Naive thymus-derived CD4-positive, alpha-beta T cell (primary cell): ENCODE measurements at regions of chr6 and their contacts with region 1.

Region 1: GRCh38 chr6:37018198-37019064 is 13.0 kb downstream of the FGD2 start:
- DNase-seq: peak; percentile 74 to 88 (median 83)
- ATAC-seq: peak; percentile 96
- H3K4me3 ChIP-seq: no peak overlapping the region
- H3K4me3 Mint-ChIP-seq: peak overlapping the region in 3 of 10 donors; percentile 17 to 40 (median 35)
- H3K27ac ChIP-seq: peak overlapping the region; percentile 15
- H3K27ac Mint-ChIP-seq: peak overlapping the region; percentile 65 to 87 (median 80)
- H3K4me1 ChIP-seq: peaks cover 23 to 32% of the 10 kb centered on the region in 2 donors
- H3K4me1 Mint-ChIP-seq: peaks cover 35 to 55% (median 46%) of the 10 kb centered on the region in 7 donors
- H3K27me3 ChIP-seq: no peaks in the 10 kb centered on the region
- H3K27me3 Mint-ChIP-seq: no peaks in the 10 kb centered on the region

Region 2: GRCh38 chr6:36765594-36766398 is 252.6 kb before region 1 on chr6:
- CTCF ChIA-PET with region 1: interaction called, 31 read pairs
- POLR2A ChIA-PET with region 1: interaction called, 3 read pairs
- intact Hi-C with region 1: loop called (anchors 1 kb)
- DNase-seq: peak; percentile 66 to 83 (median 78)
- ATAC-seq: peak; percentile 94
- H3K4me3 ChIP-seq: no peak overlapping the region
- H3K4me3 Mint-ChIP-seq: peak overlapping the region in 2 of 10 donors; percentile 16 to 25
- H3K27ac ChIP-seq: no peak overlapping the region
- H3K27ac Mint-ChIP-seq: peak overlapping the region; percentile 13 to 80 (median 56)
- H3K4me1 ChIP-seq: peaks cover 21 to 33% of the 10 kb centered on the region in 2 donors
- H3K4me1 Mint-ChIP-seq: peaks cover 28 to 42% (median 32%) of the 10 kb centered on the region in 7 donors
- H3K27me3 ChIP-seq: no peaks in the 10 kb centered on the region
- H3K27me3 Mint-ChIP-seq: no peaks in the 10 kb centered on the region

Region 3: GRCh38 chr6:36912586-36912985 is 105.8 kb before region 1 on chr6:
- CTCF ChIA-PET with region 1: interaction called, 3 read pairs
- POLR2A ChIA-PET with region 1: no interaction called
- intact Hi-C with region 1: loop called (anchors 1 kb)
- DNase-seq: peak in 8 of 9 donors; percentile 54 to 81 (median 72)
- ATAC-seq: peak; percentile 94
- H3K4me3 ChIP-seq: peak overlapping the region; percentile 32
- H3K4me3 Mint-ChIP-seq: peak overlapping the region; percentile 60 to 84 (median 74)
- H3K27ac ChIP-seq: peak overlapping the region; percentile 44
- H3K27ac Mint-ChIP-seq: peak overlapping the region; percentile 73 to 97 (median 92)
- H3K4me1 ChIP-seq: peaks cover 23% of the 10 kb centered on the region in 2 donors
- H3K4me1 Mint-ChIP-seq: peaks cover 18 to 69% (median 38%) of the 10 kb centered on the region in 7 donors
- H3K27me3 ChIP-seq: no peaks in the 10 kb centered on the region
- H3K27me3 Mint-ChIP-seq: no peaks in the 10 kb centered on the region

Region 4: GRCh38 chr6:37029249-37029971 is 11.0 kb after region 1 on chr6:
- CTCF ChIA-PET with region 1: interaction called, 22 read pairs
- POLR2A ChIA-PET with region 1: no interaction called
- intact Hi-C with region 1: no loop called
- DNase-seq: peak in 1 of 9 donors; percentile 54
- ATAC-seq: peak; percentile 92
- H3K4me3 ChIP-seq: no peak overlapping the region
- H3K4me3 Mint-ChIP-seq: peak overlapping the region in 1 of 10 donors; percentile 23
- H3K27ac ChIP-seq: no peak overlapping the region
- H3K27ac Mint-ChIP-seq: peak overlapping the region in 3 of 9 donors; percentile 22 to 84 (median 23)
- H3K4me1 ChIP-seq: peaks cover 5 to 14% of the 10 kb centered on the region in 2 donors
- H3K4me1 Mint-ChIP-seq: peaks cover 4 to 70% (median 14%) of the 10 kb centered on the region in 7 donors
- H3K27me3 ChIP-seq: no peaks in the 10 kb centered on the region
- H3K27me3 Mint-ChIP-seq: no peaks in the 10 kb centered on the region

Region 5: DNA sequence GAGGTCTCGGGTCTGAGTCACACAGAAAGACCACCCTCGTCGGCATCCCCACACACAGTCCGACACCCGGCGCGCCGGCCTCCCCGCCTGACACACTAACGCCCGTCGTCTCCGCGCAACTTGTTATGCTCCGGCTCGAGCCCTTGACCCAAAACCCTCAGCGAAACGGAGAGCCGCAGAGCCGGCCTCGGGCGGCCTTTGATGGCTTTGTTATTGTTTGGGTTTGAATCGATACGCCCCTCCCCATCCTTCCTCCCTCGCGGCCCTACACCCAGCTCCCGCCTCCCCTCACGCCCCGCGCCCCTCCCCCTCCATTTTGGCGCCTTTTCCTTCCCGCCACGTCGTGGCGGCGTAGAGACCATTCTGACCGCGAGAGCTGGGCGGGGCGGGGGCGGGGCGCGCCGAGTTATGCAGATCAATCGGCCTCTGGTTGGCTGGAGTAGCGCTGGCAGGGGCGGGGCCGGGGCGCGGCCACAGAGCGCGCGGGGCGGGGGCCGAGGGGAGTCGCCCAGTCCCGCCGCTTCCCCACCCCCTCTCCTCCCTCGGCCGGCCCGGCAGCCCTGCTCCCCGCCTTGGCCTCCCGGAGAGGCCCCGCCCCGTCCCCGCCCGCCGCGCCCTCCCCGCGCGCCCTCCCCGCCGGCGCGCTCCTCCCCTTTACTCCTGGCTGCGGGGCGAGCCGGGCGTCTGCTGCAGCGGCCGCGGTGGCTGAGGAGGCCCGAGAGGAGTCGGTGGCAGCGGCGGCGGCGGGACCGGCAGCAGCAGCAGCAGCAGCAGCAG is 151.3 kb after region 1 on chr6 and contains the start of gene PIM1:
- CTCF ChIA-PET with region 1: interaction called, 443 read pairs
- POLR2A ChIA-PET with region 1: interaction called, 276 read pairs
- intact Hi-C with region 1: loop called (anchors 1 kb)
- DNase-seq: peak; percentile 91 to 98 (median 95)
- ATAC-seq: peak; percentile 94
- H3K4me3 ChIP-seq: peak within 1 kb of the TSS; percentile 71
- H3K4me3 Mint-ChIP-seq: peak within 1 kb of the TSS; percentile 92 to 100 (median 94)
- H3K27ac ChIP-seq: peak within 1 kb of the TSS; percentile 86
- H3K27ac Mint-ChIP-seq: peak within 1 kb of the TSS; percentile 93 to 98 (median 96)
- H3K4me1 ChIP-seq: peaks cover 21% of the 10 kb centered on the region in 2 donors
- H3K4me1 Mint-ChIP-seq: peaks cover 19 to 40% (median 34%) of the 10 kb centered on the region in 7 donors
- H3K27me3 ChIP-seq: no peaks in the 10 kb centered on the region
- H3K27me3 Mint-ChIP-seq: no peaks in the 10 kb centered on the region
- total RNA-seq, gene PIM1: 100 to 550 (median 172) TPM

Region 6: GRCh38 chr6:37314487-37315156 is 296.2 kb after region 1 on chr6:
- CTCF ChIA-PET with region 1: interaction called, 6 read pairs
- POLR2A ChIA-PET with region 1: no interaction called
- intact Hi-C with region 1: loop called (anchors 1 kb)
- DNase-seq: peak in 6 of 9 donors; percentile 2 to 40 (median 20)
- ATAC-seq: peak; percentile 72
- H3K4me3 ChIP-seq: no peak overlapping the region
- H3K4me3 Mint-ChIP-seq: no peak overlapping the region
- H3K27ac ChIP-seq: no peak overlapping the region
- H3K27ac Mint-ChIP-seq: peak overlapping the region in 4 of 9 donors; percentile 0 to 68 (median 16)
- H3K4me1 ChIP-seq: no peaks in the 10 kb centered on the region
- H3K4me1 Mint-ChIP-seq: peaks cover 0 to 25% (median under 1%) of the 10 kb centered on the region in 7 donors
- H3K27me3 ChIP-seq: no peaks in the 10 kb centered on the region
- H3K27me3 Mint-ChIP-seq: no peaks in the 10 kb centered on the region

Region 7: DNA sequence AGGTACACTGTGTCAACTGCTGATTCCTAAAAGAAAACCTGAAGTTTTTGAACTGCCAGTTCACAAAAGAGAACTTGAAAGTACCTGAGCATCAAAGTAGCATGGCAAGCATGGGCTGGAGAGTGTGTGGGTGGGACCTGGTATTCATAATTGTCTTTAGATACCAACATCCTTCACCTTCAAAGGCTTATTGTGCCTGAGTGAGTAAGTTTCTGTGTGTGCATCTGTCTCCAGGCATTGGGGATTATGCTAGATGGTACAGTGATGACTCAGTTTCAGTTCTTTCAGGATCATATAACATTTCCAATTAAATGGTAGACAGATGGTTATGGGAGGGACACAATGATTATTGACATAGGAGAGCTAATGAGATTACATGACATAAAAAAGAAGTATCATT is 1039.6 kb after region 1 on chr6:
- CTCF ChIA-PET with region 1: no interaction called
- POLR2A ChIA-PET with region 1: no interaction called
- intact Hi-C with region 1: no loop called
- DNase-seq: peak in 6 of 9 donors; percentile 1 to 42 (median 34)
- ATAC-seq: peak; percentile 65
- H3K4me3 ChIP-seq: no peak overlapping the region
- H3K4me3 Mint-ChIP-seq: no peak overlapping the region
- H3K27ac ChIP-seq: no peak overlapping the region
- H3K27ac Mint-ChIP-seq: peak overlapping the region in 1 of 9 donors; percentile 1
- H3K4me1 ChIP-seq: peaks cover 0 to 7% of the 10 kb centered on the region in 2 donors
- H3K4me1 Mint-ChIP-seq: peaks cover 17 to 52% (median 45%) of the 10 kb centered on the region in 7 donors
- H3K27me3 ChIP-seq: no peaks in the 10 kb centered on the region
- H3K27me3 Mint-ChIP-seq: no peaks in the 10 kb centered on the region